ENCODE measurements at regions of chr1 and their contacts with region 1.

Region 1: GRCh38 chr1:216902669-216903381 is 179.6 kb upstream of the ESRRG start:
- DNase-seq: peak; percentile 98
- H3K4me3 ChIP-seq: peak overlapping the region in 2 of 3 experiments; percentile 7 to 10
- H3K27ac ChIP-seq: peak overlapping the region; percentile 98
- H3K4me1 ChIP-seq: peaks cover 63% of the 10 kb centered on the region
- H3K27me3 ChIP-seq: no peaks in the 10 kb centered on the region
- CTCF ChIP-seq: no peak

Region 2: DNA sequence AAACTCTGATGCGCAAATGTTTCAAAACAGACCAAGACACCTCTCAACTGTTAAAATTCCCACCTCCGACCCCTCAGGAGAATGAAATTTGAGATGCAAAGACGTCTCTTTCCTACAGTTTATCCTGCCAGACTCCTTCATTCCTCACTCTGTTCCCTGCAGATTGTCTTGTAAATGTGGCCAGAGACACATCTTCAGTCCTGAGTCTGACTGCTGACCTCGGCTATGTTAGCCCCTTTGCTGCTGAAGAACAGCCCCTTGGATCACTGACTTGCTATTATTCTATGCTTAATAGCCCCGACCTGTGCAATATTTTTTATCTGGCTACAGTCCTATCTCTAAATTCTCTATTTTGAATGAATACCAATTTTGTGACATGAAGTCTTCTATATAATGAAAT is 163.0 kb before region 1 on chr1:
- CTCF ChIA-PET with region 1: no interaction called
- dilution Hi-C with region 1: no loop called
- in situ Hi-C with region 1: no loop called
- intact Hi-C with region 1: no loop called
- DNase-seq: no peak
- H3K4me3 ChIP-seq: no peak overlapping the region
- H3K27ac ChIP-seq: no peak overlapping the region
- H3K4me1 ChIP-seq: no peaks in the 10 kb centered on the region
- H3K27me3 ChIP-seq: no peaks in the 10 kb centered on the region
- CTCF ChIP-seq: no peak

Region 3: DNA sequence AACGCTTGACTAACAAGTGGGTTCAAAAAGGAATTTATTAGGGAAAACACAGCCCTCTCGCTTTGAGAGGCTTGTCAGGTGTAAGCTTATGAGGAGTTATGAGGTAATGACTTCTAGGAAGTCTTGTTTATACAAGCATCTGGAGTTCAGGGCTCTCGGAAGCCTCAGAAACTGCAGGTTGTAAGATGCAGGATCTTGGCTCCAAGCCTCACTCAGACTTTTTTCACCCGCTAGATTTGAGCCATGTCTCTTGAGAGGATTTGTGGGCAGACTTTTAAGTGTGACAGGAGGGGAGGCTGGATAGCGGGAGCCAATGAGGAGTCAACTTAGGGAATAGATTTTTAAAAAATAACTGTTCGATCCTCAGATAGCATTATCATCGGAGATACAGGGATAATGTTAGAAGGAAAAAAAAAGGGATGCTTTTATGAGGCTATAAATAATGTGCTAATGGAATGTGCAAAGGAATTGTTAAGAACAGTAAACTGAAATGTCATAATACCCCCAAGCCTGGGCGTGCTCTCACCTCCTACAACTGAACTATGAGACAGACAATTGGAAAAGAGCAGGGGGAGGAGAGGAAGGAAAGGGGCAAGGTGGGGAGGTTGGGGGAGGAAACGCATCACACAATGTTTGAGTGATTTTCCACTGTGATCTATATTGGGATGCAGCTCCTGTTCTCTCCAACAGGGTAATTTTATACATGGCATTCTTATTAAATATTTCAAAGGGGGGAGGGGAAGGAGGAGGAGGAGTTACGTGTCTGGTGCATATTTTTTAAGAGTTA is 72.2 kb before region 1 on chr1:
- CTCF ChIA-PET with region 1: no interaction called
- dilution Hi-C with region 1: no loop called
- in situ Hi-C with region 1: no loop called
- intact Hi-C with region 1: loop called (anchors 5 kb)
- DNase-seq: no peak
- H3K4me3 ChIP-seq: no peak overlapping the region
- H3K27ac ChIP-seq: no peak overlapping the region
- H3K4me1 ChIP-seq: no peaks in the 10 kb centered on the region
- H3K27me3 ChIP-seq: no peaks in the 10 kb centered on the region
- CTCF ChIP-seq: no peak

Region 4: DNA sequence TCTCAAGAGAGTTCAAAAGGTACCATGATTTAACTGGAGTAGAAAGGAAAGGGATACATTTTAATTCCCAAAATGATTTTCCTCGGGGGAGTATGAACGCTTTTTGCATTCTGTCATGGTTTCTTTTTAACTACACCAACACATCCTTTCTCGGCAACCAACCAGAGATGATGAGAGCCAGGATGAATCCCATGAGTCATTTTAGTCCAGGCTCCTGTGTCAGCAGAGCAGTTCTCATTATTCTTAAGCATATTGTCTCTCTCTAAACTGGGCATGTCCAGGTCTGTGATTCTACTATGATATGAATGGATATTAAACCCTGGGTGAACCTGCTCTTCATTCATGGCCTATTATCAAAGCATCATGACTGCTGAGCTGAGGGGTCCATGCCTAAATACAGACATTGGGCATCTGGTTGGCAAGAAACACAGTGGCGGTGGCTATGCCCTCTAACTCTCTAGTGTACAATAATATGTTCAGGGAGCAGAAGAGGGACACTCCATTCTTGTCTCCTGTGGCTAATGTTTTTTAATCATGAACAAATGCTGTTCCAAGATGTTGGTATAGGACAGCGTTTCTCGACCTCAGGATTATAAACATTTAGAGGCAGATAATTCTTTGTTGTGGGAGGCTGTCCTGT is 55.3 kb before region 1 on chr1:
- CTCF ChIA-PET with region 1: no interaction called
- dilution Hi-C with region 1: no loop called
- in situ Hi-C with region 1: no loop called
- intact Hi-C with region 1: no loop called
- DNase-seq: peak; percentile 35
- H3K4me3 ChIP-seq: no peak overlapping the region
- H3K27ac ChIP-seq: no peak overlapping the region
- H3K4me1 ChIP-seq: no peaks in the 10 kb centered on the region
- H3K27me3 ChIP-seq: no peaks in the 10 kb centered on the region
- CTCF ChIP-seq: no peak

Region 5: GRCh38 chr1:216929870-216930582 is 27.2 kb after region 1 on chr1:
- CTCF ChIA-PET with region 1: no interaction called
- dilution Hi-C with region 1: no loop called
- in situ Hi-C with region 1: no loop called
- intact Hi-C with region 1: loop called (anchors 2 kb)
- DNase-seq: peak; percentile 92
- H3K4me3 ChIP-seq: no peak overlapping the region
- H3K27ac ChIP-seq: peak overlapping the region; percentile 65
- H3K4me1 ChIP-seq: peaks cover 20% of the 10 kb centered on the region
- H3K27me3 ChIP-seq: no peaks in the 10 kb centered on the region
- CTCF ChIP-seq: no peak

Region 6: GRCh38 chr1:216961516-216961915 is 58.7 kb after region 1 on chr1:
- CTCF ChIA-PET with region 1: no interaction called
- dilution Hi-C with region 1: no loop called
- in situ Hi-C with region 1: no loop called
- intact Hi-C with region 1: loop called (anchors 2 kb)
- DNase-seq: no peak
- H3K4me3 ChIP-seq: no peak overlapping the region
- H3K27ac ChIP-seq: no peak overlapping the region
- H3K4me1 ChIP-seq: no peaks in the 10 kb centered on the region
- H3K27me3 ChIP-seq: no peaks in the 10 kb centered on the region
- CTCF ChIP-seq: peak in 1 of 2 donors; percentile 24

Region 7: DNA sequence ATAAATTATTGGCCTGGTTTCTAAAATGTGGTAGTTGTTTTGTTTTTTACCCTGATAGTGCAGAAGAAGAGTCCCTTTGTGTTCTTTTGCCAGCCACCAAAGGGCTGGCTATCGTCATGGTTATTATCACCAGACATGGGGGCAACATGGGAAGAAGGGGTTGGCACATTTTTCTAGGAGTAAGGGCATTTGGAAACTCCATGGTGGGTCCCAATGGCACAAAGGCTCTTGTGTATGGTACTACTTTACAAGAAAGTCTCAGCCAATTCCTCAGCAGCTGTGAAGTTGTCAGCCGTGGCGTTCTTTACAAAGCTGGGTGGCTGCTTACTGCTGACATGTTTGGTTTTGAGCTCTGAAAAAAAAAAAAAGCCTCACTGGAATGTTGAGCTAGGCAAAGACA is 150.9 kb after region 1 on chr1:
- CTCF ChIA-PET with region 1: no interaction called
- dilution Hi-C with region 1: no loop called
- in situ Hi-C with region 1: no loop called
- intact Hi-C with region 1: loop called (anchors 10 kb)
- DNase-seq: no peak
- H3K4me3 ChIP-seq: no peak overlapping the region
- H3K27ac ChIP-seq: no peak overlapping the region
- H3K4me1 ChIP-seq: peaks cover 2% of the 10 kb centered on the region
- H3K27me3 ChIP-seq: peaks cover 4% of the 10 kb centered on the region
- CTCF ChIP-seq: no peak